ENCODE measurements at regions of chr4 and their contacts with region 1.

Region 1: GRCh38 chr4:78644744-78645330 is 93.3 kb downstream of the ANXA3 start:
- DNase-seq: peak; percentile 76
- H3K4me3 ChIP-seq: no peak overlapping the region
- H3K27ac ChIP-seq: peak overlapping the region; percentile 58
- H3K4me1 ChIP-seq: peaks cover 4% of the 10 kb centered on the region
- H3K27me3 ChIP-seq: no peaks in the 10 kb centered on the region
- CTCF ChIP-seq: peak; percentile 86

Region 2: GRCh38 chr4:78689061-78689660 is 44.3 kb after region 1 on chr4:
- intact Hi-C with region 1: loop called (anchors 1 kb)
- DNase-seq: no peak
- H3K4me3 ChIP-seq: no peak overlapping the region
- H3K27ac ChIP-seq: no peak overlapping the region
- H3K4me1 ChIP-seq: no peaks in the 10 kb centered on the region
- H3K27me3 ChIP-seq: no peaks in the 10 kb centered on the region
- CTCF ChIP-seq: no peak

Region 3: GRCh38 chr4:78775303-78776030 is 130.6 kb after region 1 on chr4:
- intact Hi-C with region 1: loop called (anchors 10 kb)
- DNase-seq: peak; percentile 92
- H3K4me3 ChIP-seq: peak overlapping the region; percentile 76
- H3K27ac ChIP-seq: peak overlapping the region; percentile 96
- H3K4me1 ChIP-seq: peaks cover 4% of the 10 kb centered on the region
- H3K27me3 ChIP-seq: no peaks in the 10 kb centered on the region
- CTCF ChIP-seq: no peak

Measured in colonic mucosa (tissue), 4 donors.